Activated T-helper 2 cell treated with anti-CD3 and anti-CD28 coated beads, Interferon-gamma antibody, Interleukin-2, Interleukin-4, amounts not matched to agents 10 μg/mL and 5 μg/mL and 100 μg/mL, durations not matched to agents 14 hours and 24 hours and 36 hours (primary cell): ENCODE measurements at regions of chr1 and their contacts with region 1.

Region 1: GRCh38 chr1:37692078-37692833 is at the start of gene CDCA8:
- DNase-seq: peak; percentile 99
- H3K4me3 Mint-ChIP-seq: peak within 1 kb of the TSS; percentile 94
- H3K27ac Mint-ChIP-seq: peak within 1 kb of the TSS; percentile 87
- H3K4me1 Mint-ChIP-seq: peaks cover 37% of the 10 kb centered on the region
- H3K27me3 Mint-ChIP-seq: no peaks in the 10 kb centered on the region
- total RNA-seq, gene CDCA8: 41.2 TPM in 2 replicates

Region 2: GRCh38 chr1:37479255-37480124 is 212.8 kb before region 1 on chr1:
- intact Hi-C with region 1: loop called (anchors 5 kb)
- DNase-seq: peak; percentile 80
- H3K4me3 Mint-ChIP-seq: peak overlapping the region; percentile 96
- H3K27ac Mint-ChIP-seq: peak overlapping the region; percentile 98
- H3K4me1 Mint-ChIP-seq: peaks cover 30% of the 10 kb centered on the region
- H3K27me3 Mint-ChIP-seq: no peaks in the 10 kb centered on the region

Region 3: GRCh38 chr1:37595440-37596319 is 96.6 kb before region 1 on chr1 and contains the start of gene GNL2:
- intact Hi-C with region 1: loop called (anchors 2 kb)
- DNase-seq: peak; percentile 97
- H3K4me3 Mint-ChIP-seq: peak within 1 kb of the TSS; percentile 99
- H3K27ac Mint-ChIP-seq: peak within 1 kb of the TSS; percentile 92
- H3K4me1 Mint-ChIP-seq: peaks cover 22% of the 10 kb centered on the region
- H3K27me3 Mint-ChIP-seq: peaks cover 3% of the 10 kb centered on the region
- total RNA-seq, gene GNL2: 95.6 and 98.0 TPM in 2 replicates

Region 4: DNA sequence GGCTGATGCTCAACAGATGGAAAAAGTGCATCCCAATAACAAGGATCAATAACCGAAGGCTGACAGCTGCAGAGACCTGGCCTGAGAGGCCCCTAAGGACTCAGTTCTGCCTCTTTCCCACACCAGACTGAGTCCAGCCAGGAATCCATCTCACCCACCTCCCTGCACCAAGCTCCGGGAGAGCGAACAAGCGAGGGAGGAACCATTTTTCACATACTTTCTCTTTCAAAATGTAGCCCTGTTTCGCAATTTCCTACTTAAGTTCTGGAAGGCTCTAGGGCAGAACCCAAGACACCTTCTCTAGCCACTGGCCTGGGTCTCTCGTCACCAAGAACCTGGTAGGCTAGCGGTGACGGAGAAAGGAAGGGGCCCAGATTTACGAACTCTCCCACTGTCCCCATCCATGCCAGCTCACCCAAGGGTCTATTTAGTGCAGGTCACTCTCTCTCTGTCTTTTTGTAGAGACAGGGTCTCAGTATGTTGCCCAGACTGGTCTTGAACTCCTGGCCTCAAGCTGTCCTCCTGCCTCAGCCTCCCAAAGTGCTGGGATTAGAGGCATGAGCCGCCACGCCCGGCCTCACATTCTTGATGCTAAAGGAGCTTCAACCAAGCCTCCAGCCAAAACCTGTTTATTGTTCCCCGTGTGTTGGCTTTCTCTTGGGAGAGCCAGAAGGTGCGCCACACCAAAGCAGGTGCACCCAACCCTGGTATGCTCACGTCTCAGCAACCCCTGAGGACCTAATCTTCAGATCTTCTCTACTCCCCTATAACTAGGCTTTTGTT is 85.6 kb before region 1 on chr1:
- intact Hi-C with region 1: no loop called
- DNase-seq: no peak
- H3K4me3 Mint-ChIP-seq: no peak overlapping the region
- H3K27ac Mint-ChIP-seq: no peak overlapping the region
- H3K4me1 Mint-ChIP-seq: no peaks in the 10 kb centered on the region
- H3K27me3 Mint-ChIP-seq: peaks cover 6% of the 10 kb centered on the region

Region 5: DNA sequence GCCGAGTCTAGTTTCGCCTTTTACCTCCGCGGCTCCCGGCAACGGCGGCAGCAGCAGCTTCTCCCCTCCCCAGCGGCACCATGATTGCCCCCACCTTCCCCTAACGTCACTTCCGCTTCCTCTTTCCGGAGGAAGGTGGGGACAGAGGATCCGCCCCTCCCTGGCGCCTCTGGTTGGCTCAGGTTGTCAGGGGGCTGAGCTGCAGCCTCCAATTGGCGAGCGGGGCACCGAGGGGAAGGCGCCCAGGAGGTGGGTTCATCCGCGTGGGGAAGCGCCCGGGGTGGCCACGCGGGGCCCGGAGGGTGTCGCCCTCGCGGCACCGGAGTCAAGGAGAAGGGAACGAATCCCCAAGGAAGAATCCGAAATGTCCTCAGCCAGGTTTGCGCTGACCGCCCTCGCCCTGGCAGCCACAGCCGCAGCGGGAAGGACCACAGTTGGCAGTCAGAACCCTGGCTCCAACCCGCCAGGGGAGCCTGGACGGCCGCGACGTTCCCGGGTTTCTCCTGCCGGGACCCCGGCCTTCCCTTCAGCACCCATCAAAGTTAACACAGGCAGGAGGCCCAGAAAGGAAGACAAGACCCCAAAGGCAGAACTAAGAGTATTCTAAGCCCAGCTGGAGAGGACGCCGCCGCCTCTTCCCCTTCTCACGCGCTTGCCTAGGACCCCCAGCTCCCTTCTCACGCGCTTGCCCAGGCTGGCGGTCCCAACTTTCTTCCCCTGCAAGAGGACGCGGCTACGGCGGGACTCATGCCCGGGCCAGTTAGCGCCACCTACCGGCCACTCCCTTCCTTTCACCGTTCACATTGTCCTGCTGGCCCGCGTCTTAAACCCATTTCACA is 167.5 kb after region 1 on chr1 and contains the start of gene MTF1:
- intact Hi-C with region 1: loop called (anchors 2 kb)
- DNase-seq: peak; percentile 96
- H3K4me3 Mint-ChIP-seq: peak within 1 kb of the TSS; percentile 88
- H3K27ac Mint-ChIP-seq: peak within 1 kb of the TSS; percentile 89
- H3K4me1 Mint-ChIP-seq: peaks cover 26% of the 10 kb centered on the region
- H3K27me3 Mint-ChIP-seq: no peaks in the 10 kb centered on the region
- total RNA-seq, gene MTF1: 24.8 and 27.8 TPM in 2 replicates